T-cell (primary cell): ENCODE measurements at regions of chr1 and their contacts with region 1.

Region 1: GRCh38 chr1:109213785-109214468 is at the start of gene SARS1:
- DNase-seq: peak; percentile 70 to 92 (median 82)
- ATAC-seq: peak; percentile 87 to 90 (median 88)
- H3K4me3 ChIP-seq: peak within 1 kb of the TSS; percentile 97 to 99
- H3K4me3 Mint-ChIP-seq: peak within 1 kb of the TSS; percentile 92 to 99 (median 98)
- H3K27ac ChIP-seq: peak within 1 kb of the TSS; percentile 66
- H3K27ac Mint-ChIP-seq: peak within 1 kb of the TSS; percentile 96 to 97
- H3K4me1 ChIP-seq: peaks cover 11 to 30% of the 10 kb centered on the region in 2 experiments
- H3K4me1 Mint-ChIP-seq: peaks cover 34 to 39% (median 36%) of the 10 kb centered on the region in 3 donors
- H3K27me3 ChIP-seq: no peaks in the 10 kb centered on the region
- H3K27me3 Mint-ChIP-seq: no peaks in the 10 kb centered on the region
- total RNA-seq, gene SARS1: 106 to 192 (median 173) TPM

Region 2: GRCh38 chr1:109253484-109254141 is 39.7 kb after region 1 on chr1:
- CTCF ChIA-PET with region 1: interaction called in 1 of 2 experiments, 10 read pairs
- POLR2A ChIA-PET with region 1: no interaction called
- DNase-seq: no peak
- ATAC-seq: no peak
- H3K4me3 ChIP-seq: no peak overlapping the region
- H3K4me3 Mint-ChIP-seq: no peak overlapping the region
- H3K27ac ChIP-seq: no peak overlapping the region
- H3K27ac Mint-ChIP-seq: no peak overlapping the region
- H3K4me1 ChIP-seq: peaks cover 0 to 39% of the 10 kb centered on the region in 2 experiments
- H3K4me1 Mint-ChIP-seq: peaks cover 7 to 23% (median 23%) of the 10 kb centered on the region in 3 donors
- H3K27me3 ChIP-seq: peaks cover 0 to 20% of the 10 kb centered on the region in 2 experiments
- H3K27me3 Mint-ChIP-seq: no peaks in the 10 kb centered on the region